T-cell (primary cell): ENCODE measurements at regions of chr2 and their contacts with region 1.

Region 1: DNA sequence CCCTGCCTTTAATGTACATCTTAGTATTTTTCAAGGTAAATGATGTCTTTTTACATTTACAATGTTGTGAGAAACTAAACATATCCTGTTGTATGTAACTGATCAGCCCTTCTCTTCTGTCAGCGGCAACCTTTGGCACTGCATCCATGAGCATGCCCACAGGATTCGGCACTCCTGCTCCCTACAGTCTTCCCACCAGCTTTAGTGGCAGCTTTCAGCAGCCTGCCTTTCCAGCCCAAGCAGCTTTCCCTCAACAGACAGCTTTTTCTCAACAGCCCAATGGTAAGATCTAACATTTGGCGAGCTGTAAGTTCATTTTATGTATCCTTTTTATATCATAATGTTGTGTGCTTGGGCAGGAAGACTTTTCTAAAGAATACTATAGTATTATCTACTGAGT is 46.9 kb upstream of the SCYGR2 start:
- DNase-seq: no peak
- ATAC-seq: no peak
- H3K4me3 ChIP-seq: no peak overlapping the region
- H3K4me3 Mint-ChIP-seq: no peak overlapping the region
- H3K27ac ChIP-seq: no peak overlapping the region
- H3K27ac Mint-ChIP-seq: no peak overlapping the region
- H3K4me1 ChIP-seq: no peaks in the 10 kb centered on the region
- H3K4me1 Mint-ChIP-seq: no peaks in the 10 kb centered on the region
- H3K27me3 ChIP-seq: no peaks in the 10 kb centered on the region
- H3K27me3 Mint-ChIP-seq: no peaks in the 10 kb centered on the region

Region 2: DNA sequence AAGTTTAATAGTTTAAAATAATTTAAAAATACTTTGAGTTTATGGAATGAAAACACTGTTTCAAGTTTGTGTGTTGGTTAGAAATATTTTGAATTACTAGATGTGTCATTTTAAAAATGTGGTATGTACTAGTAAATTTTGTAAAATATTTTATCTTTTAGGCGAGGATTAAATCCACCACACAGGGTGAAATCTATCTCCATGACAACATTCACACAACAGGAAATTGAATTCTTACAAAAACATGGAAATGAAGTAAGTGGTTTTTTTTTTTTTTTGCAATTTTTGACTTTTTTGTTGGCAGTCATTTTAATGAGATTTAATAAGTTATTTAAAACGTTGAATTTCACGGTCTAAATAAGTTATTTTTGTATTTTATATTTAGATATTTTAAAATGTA is 60.5 kb before region 1 on chr2:
- CTCF ChIA-PET with region 1: interaction called in 1 of 2 experiments, 4 read pairs
- POLR2A ChIA-PET with region 1: interaction called in 1 of 2 experiments, 10 read pairs
- DNase-seq: no peak
- ATAC-seq: no peak
- H3K4me3 ChIP-seq: no peak overlapping the region
- H3K4me3 Mint-ChIP-seq: no peak overlapping the region
- H3K27ac ChIP-seq: no peak overlapping the region
- H3K27ac Mint-ChIP-seq: no peak overlapping the region
- H3K4me1 ChIP-seq: peaks cover 3 to 7% of the 10 kb centered on the region in 2 experiments
- H3K4me1 Mint-ChIP-seq: peaks cover 53 to 57% (median 54%) of the 10 kb centered on the region in 3 donors
- H3K27me3 ChIP-seq: no peaks in the 10 kb centered on the region
- H3K27me3 Mint-ChIP-seq: no peaks in the 10 kb centered on the region